ENCODE measurements at regions of chr2 and their contacts with region 1.

Region 1: DNA sequence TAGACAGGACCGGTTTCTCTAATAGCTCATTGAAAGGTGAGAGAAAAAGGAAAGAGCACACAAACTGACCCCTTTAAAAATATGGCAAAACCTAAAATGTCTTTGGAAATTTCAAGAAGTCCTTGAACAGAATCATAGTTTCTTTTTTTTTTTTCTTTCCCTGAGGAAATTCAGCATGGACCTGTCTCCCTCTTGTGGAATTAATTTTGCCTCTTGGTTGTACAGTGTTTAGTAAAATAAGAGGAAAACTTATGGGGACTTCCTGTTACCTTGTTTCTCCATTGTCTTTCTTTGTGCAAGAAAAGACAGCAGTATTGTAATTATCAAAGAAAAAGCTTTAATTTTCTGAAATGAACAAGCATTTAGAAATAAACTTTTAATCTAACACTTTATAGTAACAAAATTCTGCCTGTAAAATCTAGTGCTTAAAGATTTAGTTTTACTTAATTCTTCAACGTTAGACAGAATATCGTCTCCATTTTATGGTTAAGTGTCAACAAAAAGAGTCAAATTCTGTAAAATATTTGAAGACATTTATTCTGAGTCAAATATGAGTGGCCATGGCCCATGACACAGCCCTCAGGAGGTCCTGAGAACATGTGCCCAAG is 176.3 kb upstream of the NABP1 start:
- DNase-seq: no peak
- ATAC-seq: peak; percentile 68
- H3K4me3 ChIP-seq: no peak overlapping the region
- H3K27ac ChIP-seq: peak overlapping the region in 3 of 4 donors; percentile 21 to 56 (median 37)
- H3K4me1 ChIP-seq: peaks cover 39% of the 10 kb centered on the region
- H3K27me3 ChIP-seq: no peaks in the 10 kb centered on the region
- CTCF ChIP-seq: peak; percentile 42 to 88 (median 82)
- POLR2A ChIP-seq: no peak

Region 2: DNA sequence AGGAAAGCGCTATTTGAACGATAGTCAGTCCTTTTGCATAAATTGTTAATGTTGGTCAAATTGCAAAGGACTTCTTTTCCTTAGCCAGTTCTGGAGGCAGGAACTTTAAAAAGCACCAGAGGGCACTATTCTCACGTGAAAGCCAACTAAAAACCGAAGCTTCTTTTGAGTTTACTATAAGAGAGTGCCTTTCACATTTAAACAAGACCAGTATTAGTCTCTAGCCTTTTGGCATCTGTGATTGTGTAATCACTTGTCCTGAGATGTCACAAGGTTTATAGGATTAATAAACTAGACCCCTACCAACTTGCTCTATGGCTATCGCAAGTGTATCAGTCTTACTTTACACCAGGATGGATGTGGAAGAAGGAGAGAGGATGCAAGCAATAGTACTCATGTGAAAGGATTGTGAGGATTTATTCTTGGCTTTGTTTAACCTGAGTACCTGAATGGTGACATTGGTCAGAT is 336.5 kb before region 1 on chr2:
- intact Hi-C with region 1: loop called (anchors 5 kb)
- DNase-seq: peak in 3 of 4 donors; percentile 16 to 22 (median 22)
- ATAC-seq: peak; percentile 81
- H3K4me3 ChIP-seq: no peak overlapping the region
- H3K27ac ChIP-seq: peak overlapping the region in 2 of 4 donors; percentile 32 to 44
- H3K4me1 ChIP-seq: peaks cover 15% of the 10 kb centered on the region
- H3K27me3 ChIP-seq: no peaks in the 10 kb centered on the region
- CTCF ChIP-seq: peak; percentile 38 to 70 (median 55)
- POLR2A ChIP-seq: no peak

Region 3: DNA sequence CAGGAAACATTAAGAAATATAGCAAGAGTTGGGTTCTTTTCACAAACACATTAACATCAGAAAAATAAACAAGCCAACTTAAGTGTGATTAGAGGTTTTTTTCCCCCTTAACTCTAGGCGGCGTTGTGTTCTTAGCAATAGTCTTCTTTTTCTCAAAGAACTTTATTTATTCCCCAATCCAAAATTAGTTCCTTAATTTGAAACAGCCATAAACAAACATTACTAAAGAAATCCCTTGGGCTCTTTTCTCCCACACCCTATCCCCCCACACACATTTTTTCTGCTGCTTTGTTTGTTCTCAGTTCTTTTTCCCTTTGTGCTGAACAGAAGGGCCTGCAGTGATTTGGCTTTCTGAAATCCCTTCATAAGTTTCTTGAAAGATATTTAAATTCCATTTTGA is 269.7 kb before region 1 on chr2:
- intact Hi-C with region 1: loop called (anchors 5 kb)
- DNase-seq: no peak
- ATAC-seq: no peak
- H3K4me3 ChIP-seq: no peak overlapping the region
- H3K27ac ChIP-seq: peak overlapping the region in 1 of 4 donors; percentile 16
- H3K4me1 ChIP-seq: peaks cover 12% of the 10 kb centered on the region
- H3K27me3 ChIP-seq: no peaks in the 10 kb centered on the region
- CTCF ChIP-seq: peak in 4 of 7 experiments; percentile 32 to 56 (median 42)
- POLR2A ChIP-seq: no peak

Region 4: GRCh38 chr2:191265311-191266170 is 236.1 kb before region 1 on chr2:
- intact Hi-C with region 1: no loop called
- DNase-seq: no peak
- ATAC-seq: peak; percentile 13
- H3K4me3 ChIP-seq: no peak overlapping the region
- H3K27ac ChIP-seq: peak overlapping the region in 3 of 4 donors; percentile 25 to 39 (median 29)
- H3K4me1 ChIP-seq: peaks cover 66% of the 10 kb centered on the region
- H3K27me3 ChIP-seq: no peaks in the 10 kb centered on the region
- CTCF ChIP-seq: no peak
- POLR2A ChIP-seq: no peak

Measured in body of pancreas (tissue), 4 donors.